ENCODE measurements at regions of chr20 and their contacts with region 1.

Region 1: DNA sequence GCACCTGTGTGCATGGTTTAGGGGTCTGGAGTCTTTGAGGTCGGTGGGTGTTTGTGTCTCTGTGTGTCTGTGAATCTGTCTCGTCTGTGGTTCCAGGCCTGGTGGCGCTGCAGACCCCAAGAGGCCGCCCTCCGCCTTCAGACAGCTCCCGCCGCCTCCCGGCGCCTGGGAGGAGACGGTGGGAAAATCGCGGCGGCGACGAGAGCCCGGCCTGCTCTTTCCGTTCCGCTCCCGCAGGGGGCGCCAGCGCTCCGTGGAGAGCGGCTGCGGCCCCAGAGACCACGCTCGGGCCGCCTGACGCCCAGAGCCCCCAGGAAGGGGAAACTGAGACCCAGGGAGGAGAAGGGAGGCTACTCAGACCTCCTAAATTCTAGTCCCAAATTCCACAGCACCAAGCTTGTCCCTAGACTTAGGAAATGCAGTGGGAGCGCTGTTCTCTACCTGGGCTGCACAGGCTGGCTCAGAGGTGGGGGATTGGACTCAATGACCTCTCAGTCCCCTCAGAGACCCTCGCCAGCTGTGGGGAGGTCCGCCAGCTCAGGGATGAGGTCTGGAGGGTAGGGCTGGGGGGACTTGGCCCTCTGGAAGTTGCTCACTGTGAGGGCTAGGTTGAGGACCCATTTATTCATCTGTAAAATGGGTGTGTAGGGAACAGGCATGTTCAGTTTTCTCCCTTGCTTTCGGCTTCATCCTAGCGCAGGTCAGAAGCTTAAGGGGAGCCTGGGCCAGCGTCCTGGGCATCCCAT is 36.9 kb upstream of the BLCAP start:
- DNase-seq: peak; percentile 19 to 46
- ATAC-seq: peak; percentile 80 to 91
- H3K4me3 ChIP-seq: no peak overlapping the region
- H3K27ac ChIP-seq: 0 out of 6 replicates have a peak overlapping the region, but pooled peaks of 1 of the 2 experiments have one; percentile 37
- H3K4me1 ChIP-seq: peaks cover 5% of the 10 kb centered on the region; the same call in 1 of the 3 replicates
- CTCF ChIP-seq: peak; percentile 96
- EP300 ChIP-seq: no peak
- POLR2A ChIP-seq: no peak
- RAD21 ChIP-seq: peak; percentile 90 to 97

Region 2: DNA sequence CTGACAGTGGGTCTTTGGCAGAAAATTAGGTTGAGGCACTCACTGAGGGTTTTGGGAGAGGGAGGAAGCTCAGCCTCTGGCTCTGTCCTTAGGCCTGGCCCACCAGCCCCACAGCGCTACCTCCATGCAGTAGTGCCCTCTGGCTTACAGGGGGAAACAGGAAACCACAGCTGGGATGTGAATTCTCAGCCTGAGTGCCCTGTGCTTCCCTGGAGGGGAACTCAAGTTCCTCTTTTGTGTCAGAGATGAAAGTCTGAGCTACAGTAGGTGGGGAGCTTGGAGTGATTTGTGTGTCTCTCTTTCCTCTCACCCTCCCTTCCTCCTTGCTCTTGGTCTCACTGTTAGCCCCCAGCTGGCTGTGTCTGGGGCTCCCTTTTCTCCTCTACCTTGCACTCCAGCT is 11.3 kb after region 1 on chr20:
- CTCF ChIA-PET with region 1: interaction called, 42 read pairs
- POLR2A ChIA-PET with region 1: no interaction called
- DNase-seq: no peak
- ATAC-seq: 0 out of 6 replicates have a peak, but pooled peaks have one; percentile 23 to 26
- H3K4me3 ChIP-seq: no peak overlapping the region
- H3K27ac ChIP-seq: no peak overlapping the region
- H3K4me1 ChIP-seq: no peaks in the 10 kb centered on the region
- CTCF ChIP-seq: no peak
- EP300 ChIP-seq: no peak
- POLR2A ChIP-seq: no peak
- RAD21 ChIP-seq: no peak

Region 3: DNA sequence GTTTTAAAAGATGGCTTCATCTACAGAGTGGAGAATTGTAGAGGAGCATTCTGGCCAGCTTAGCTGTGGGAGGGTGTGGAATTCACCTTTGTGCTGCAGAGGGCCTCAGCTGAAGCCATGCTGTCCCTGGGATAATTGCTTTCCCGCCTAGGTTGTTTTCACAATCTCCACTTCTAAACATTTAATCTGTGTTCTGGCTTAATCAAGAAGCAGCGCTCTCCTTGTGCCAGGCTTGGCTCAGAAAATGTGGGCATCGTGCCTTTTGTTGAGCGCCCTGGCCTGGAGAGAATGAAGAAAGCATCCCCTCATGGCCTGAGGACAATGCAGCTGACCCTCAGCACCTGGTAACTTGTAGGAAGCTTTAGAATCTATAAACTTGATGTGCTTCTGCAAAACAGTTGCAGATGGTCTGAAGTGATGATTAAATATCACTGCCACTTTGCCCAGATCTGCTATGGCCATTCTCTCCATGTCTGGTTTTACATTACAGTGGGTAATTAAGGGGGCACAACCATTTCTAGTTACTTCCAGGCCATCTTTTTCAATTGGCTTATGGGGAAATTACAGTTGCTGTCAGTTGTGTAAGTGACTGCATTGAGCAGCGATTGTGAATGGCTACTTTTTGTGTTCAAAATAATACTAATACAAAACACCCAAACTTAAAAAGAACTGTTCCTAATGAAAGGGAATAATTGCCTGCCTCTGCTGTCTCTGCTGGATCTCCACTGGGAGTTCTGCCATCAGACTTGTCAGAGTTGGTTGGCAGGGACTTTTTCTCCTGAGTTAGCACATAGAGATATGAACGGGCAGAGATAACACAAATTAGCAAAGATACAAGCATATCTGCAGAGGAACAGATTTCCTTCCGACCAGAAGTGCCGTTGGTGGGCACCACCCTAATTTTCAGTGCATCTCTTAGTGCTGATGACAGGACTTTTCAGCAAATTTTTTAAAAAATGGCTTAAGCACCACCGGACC is 147.7 kb after region 1 on chr20:
- CTCF ChIA-PET with region 1: interaction called, 11 read pairs
- POLR2A ChIA-PET with region 1: no interaction called
- DNase-seq: no peak
- ATAC-seq: no peak
- H3K4me3 ChIP-seq: no peak overlapping the region
- H3K27ac ChIP-seq: no peak overlapping the region
- H3K4me1 ChIP-seq: no peaks in the 10 kb centered on the region
- CTCF ChIP-seq: no peak
- EP300 ChIP-seq: no peak
- POLR2A ChIP-seq: no peak
- RAD21 ChIP-seq: no peak

Region 4: GRCh38 chr20:37990571-37991151 is 426.1 kb after region 1 on chr20:
- CTCF ChIA-PET with region 1: interaction called, 40 read pairs
- POLR2A ChIA-PET with region 1: no interaction called
- DNase-seq: peak; percentile 15 to 52
- ATAC-seq: peak; percentile 41 to 64; a peak in 3 of 6 replicates
- H3K4me3 ChIP-seq: no peak overlapping the region
- H3K27ac ChIP-seq: peak overlapping the region; percentile 41 to 50; a peak in 2 of 6 replicates
- H3K4me1 ChIP-seq: peaks cover 72% of the 10 kb centered on the region
- CTCF ChIP-seq: no peak
- EP300 ChIP-seq: no peak
- POLR2A ChIP-seq: no peak
- RAD21 ChIP-seq: no peak

Region 5: DNA sequence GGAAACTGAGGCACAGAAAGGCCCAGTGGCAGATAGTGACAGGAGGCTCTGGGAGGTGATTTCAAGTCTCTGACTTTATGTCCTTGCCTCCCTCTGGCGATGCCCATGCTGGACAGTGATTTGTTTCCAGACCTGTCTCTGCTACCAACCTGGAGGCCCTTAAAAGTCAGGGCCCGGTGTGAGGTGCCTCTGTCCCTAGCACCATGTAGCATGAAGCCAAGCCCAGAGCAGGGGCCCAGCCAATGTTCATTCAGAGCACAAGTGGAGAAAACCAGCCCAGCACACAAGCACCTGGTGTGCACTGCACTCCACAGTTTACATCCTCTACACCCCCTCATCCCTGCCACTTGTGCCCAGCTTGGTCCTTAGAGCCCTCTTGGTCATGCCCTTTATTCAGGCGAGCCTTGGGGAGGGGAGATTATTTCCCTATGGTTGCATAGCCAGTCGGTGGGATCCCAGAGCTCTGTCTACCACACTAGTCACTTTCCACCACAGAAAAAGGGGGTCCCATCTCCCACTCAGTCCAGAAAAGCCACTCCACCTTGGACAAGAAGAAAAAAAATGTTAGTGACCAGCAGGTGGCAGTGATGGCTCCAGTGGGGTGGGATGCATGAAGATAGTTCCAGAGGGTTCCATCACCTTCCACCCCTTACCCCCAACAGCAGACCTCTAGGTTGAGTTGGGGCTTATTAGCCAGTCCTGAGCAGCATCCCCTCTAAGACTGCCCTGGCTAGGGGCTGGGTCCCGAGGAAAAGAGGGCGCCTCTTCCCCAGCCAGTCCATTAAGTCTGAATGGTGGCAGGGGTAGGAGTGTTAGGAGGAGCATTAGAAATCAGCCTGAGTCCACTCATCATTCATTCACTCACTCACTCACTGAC is 665.1 kb after region 1 on chr20:
- CTCF ChIA-PET with region 1: interaction called, 10 read pairs
- POLR2A ChIA-PET with region 1: no interaction called
- DNase-seq: no peak
- ATAC-seq: peak in 1 of 2 experiments; percentile 42; a peak in 2 of 6 replicates
- H3K4me3 ChIP-seq: no peak overlapping the region
- H3K27ac ChIP-seq: no peak overlapping the region
- H3K4me1 ChIP-seq: no peaks in the 10 kb centered on the region
- CTCF ChIP-seq: peak; percentile 57
- EP300 ChIP-seq: no peak
- POLR2A ChIP-seq: no peak
- RAD21 ChIP-seq: peak; percentile 38 to 40

Region 6: GRCh38 chr20:38406476-38406875 is 841.9 kb after region 1 on chr20:
- CTCF ChIA-PET with region 1: interaction called, 10 read pairs
- POLR2A ChIA-PET with region 1: no interaction called
- DNase-seq: no peak
- ATAC-seq: no peak
- H3K4me3 ChIP-seq: no peak overlapping the region
- H3K27ac ChIP-seq: no peak overlapping the region
- H3K4me1 ChIP-seq: peaks cover 5% of the 10 kb centered on the region; the same call in 2 of the 3 replicates
- CTCF ChIP-seq: no peak
- EP300 ChIP-seq: no peak
- POLR2A ChIP-seq: no peak
- RAD21 ChIP-seq: no peak